Activated CD4-positive, alpha-beta memory T cell treated with anti-CD3 and anti-CD28 coated beads, Interleukin-2, amount 10 ng/mL, durations not matched to agents 7 days and 5 days (primary cell): ENCODE measurements at regions of chr6 and their contacts with region 1.

Region 1: DNA sequence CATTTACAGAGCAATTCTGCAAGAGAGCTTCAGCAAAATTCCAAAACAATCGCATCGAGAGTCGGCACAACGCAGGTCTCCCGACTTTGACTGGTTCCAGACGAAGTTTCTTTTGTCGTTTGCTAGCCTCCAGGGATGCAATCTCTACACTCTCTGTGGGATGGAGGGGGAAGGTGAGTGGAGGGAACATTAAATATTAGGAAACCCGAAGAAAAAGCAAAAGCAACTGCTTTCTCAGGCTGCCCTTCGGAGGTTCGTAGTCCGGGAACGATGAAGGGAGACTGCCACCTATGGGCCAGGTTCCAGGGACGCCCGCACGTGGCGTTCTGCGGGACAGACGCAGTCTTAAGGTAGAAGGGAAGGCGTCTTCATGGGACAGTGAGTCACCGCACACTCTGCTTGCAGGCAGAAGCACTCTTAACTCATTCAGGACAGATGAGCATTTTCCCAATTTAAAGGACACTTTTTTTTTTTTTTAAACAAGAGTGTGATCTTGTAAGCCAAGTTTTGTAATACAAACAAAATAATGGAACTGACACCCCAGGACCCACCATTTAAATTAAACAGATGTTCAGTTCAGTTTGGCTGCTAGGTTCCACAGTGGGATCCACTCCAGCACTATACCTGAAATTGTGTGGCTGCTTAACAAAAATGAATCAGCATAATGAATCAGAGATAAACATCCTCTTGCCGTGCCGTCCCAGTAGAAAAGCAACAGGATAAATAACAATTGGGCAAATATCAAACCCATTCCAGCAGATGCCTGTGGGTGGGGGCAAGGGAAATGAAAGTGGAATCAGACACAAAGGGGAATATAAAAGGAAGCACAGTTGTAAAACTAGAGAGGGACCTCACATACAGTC is 65.8 kb upstream of the ARMC2 start:
- DNase-seq: peak; percentile 86
- H3K4me3 Mint-ChIP-seq: peak overlapping the region; percentile 71
- H3K27ac Mint-ChIP-seq: no peak overlapping the region
- H3K4me1 Mint-ChIP-seq: peaks cover 14% of the 10 kb centered on the region
- H3K27me3 Mint-ChIP-seq: peaks cover 13% of the 10 kb centered on the region

Region 2: DNA sequence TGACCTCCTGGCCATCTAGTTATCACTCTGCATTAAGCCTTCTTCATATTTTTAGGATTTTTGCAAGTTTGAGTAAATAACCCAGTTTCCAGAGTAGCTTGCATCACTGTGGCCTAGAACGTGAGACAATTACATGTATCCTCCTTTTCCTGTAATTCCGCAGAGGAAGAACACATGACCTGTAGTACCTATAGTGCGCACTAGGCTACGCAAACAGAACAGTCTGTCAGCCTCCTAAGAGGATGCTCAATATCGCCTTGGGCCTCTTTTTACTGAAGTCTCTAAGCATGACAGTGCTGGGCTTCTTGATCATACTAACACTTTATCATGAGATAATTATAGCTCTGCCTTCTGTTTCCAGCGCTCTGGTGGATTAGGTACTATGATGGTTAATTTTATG is 636.8 kb before region 1 on chr6:
- CTCF ChIA-PET with region 1: no interaction called
- POLR2A ChIA-PET with region 1: no interaction called
- DNase-seq: no peak
- H3K4me3 Mint-ChIP-seq: no peak overlapping the region
- H3K27ac Mint-ChIP-seq: no peak overlapping the region
- H3K4me1 Mint-ChIP-seq: no peaks in the 10 kb centered on the region
- H3K27me3 Mint-ChIP-seq: peaks cover 40% of the 10 kb centered on the region

Region 3: DNA sequence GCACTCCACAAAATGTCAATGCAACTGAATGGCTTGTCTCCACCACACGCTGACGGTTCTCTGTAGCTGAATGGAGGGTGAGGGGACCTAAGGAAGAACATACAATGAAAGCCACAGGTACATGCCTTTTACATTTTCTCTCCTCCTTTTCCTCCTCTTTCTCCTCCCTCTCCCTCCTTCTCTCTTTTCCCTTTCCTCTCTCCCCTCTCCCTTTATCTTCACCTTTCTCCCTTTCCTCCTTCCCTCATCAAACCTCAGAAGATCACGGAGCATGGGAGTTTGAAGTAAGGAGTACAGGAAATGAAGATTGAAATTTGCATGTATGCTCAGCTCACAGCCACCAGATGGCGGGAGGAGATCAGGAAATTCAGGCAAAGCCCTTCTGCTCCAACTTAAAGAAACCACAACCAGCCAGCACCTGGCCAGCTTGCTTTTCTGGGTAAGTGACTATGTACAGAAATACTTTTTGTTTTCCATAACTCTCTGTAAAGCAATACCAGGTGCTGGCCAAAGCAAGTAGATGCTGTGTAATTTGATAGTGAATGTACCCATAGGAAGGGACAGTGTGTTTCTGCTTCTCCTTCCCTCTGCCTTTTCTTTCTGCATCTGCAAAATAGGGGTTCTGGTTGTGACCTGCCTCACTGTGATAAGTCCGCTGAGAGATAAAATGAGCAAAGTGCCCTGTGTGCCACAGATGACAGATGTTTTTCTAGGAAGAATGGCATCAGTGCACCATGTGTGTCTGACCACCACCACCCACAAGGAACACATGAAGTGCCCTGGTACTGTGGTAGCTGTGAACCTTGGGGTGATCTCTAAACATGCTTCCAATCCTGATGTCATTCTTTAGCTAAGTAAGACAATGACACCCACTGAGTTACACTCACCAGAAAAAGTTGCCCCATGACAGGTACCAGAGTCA is 240.3 kb before region 1 on chr6:
- CTCF ChIA-PET with region 1: interaction called, 12 read pairs
- POLR2A ChIA-PET with region 1: no interaction called
- DNase-seq: peak; percentile 78
- H3K4me3 Mint-ChIP-seq: peak overlapping the region; percentile 40
- H3K27ac Mint-ChIP-seq: no peak overlapping the region
- H3K4me1 Mint-ChIP-seq: peaks cover 23% of the 10 kb centered on the region
- H3K27me3 Mint-ChIP-seq: peaks cover 18% of the 10 kb centered on the region

Region 4: GRCh38 chr6:108667993-108668392 is 114.4 kb before region 1 on chr6:
- CTCF ChIA-PET with region 1: no interaction called
- POLR2A ChIA-PET with region 1: no interaction called
- DNase-seq: no peak
- H3K4me3 Mint-ChIP-seq: no peak overlapping the region
- H3K27ac Mint-ChIP-seq: no peak overlapping the region
- H3K4me1 Mint-ChIP-seq: peaks cover 29% of the 10 kb centered on the region
- H3K27me3 Mint-ChIP-seq: no peaks in the 10 kb centered on the region